HepG2 (cell line): ENCODE measurements at regions of chr1 and their contacts with region 1.

Region 1: GRCh38 chr1:33256701-33257399 is 558 bp downstream of the ZNF362 start:
- DNase-seq: peak; percentile 88
- ATAC-seq: peak; percentile 21
- H3K4me3 ChIP-seq: peak overlapping the region; percentile 72 to 98 (median 86)
- H3K27ac ChIP-seq: peak overlapping the region; percentile 97
- H3K4me1 ChIP-seq: peaks cover 53% of the 10 kb centered on the region
- H3K27me3 ChIP-seq: no peaks in the 10 kb centered on the region; a peak in 1 of 5 replicates
- CTCF ChIP-seq: no peak
- EP300 ChIP-seq: peak in 1 of 2 experiments; percentile 67; a peak in 2 of 4 replicates
- POLR2A ChIP-seq: peak; percentile 59 to 70; a peak in 3 of 4 replicates
- RAD21 ChIP-seq: no peak

Region 2: GRCh38 chr1:33181921-33182341 is 74.9 kb before region 1 on chr1 and contains the start of gene TRIM62:
- CTCF ChIA-PET with region 1: no interaction called
- POLR2A ChIA-PET with region 1: interaction called, 12 read pairs
- in situ Hi-C with region 1: no loop called
- intact Hi-C with region 1: no loop called
- DNase-seq: peak; percentile 50
- ATAC-seq: peak; percentile 78
- H3K4me3 ChIP-seq: peak within 1 kb of the TSS; percentile 53 to 81 (median 80)
- H3K27ac ChIP-seq: no peak within 1 kb of the TSS
- H3K4me1 ChIP-seq: peaks cover 23% of the 10 kb centered on the region
- H3K27me3 ChIP-seq: peaks cover 0 to 5% of the 10 kb centered on the region in 2 experiments; a peak in 1 of 5 replicates
- CTCF ChIP-seq: no peak
- EP300 ChIP-seq: no peak
- POLR2A ChIP-seq: peak in 1 of 2 experiments; percentile 55; a peak in 2 of 4 replicates
- RAD21 ChIP-seq: no peak
- total RNA-seq, gene TRIM62: 0.53 and 1.1 TPM in 2 replicates

Region 3: DNA sequence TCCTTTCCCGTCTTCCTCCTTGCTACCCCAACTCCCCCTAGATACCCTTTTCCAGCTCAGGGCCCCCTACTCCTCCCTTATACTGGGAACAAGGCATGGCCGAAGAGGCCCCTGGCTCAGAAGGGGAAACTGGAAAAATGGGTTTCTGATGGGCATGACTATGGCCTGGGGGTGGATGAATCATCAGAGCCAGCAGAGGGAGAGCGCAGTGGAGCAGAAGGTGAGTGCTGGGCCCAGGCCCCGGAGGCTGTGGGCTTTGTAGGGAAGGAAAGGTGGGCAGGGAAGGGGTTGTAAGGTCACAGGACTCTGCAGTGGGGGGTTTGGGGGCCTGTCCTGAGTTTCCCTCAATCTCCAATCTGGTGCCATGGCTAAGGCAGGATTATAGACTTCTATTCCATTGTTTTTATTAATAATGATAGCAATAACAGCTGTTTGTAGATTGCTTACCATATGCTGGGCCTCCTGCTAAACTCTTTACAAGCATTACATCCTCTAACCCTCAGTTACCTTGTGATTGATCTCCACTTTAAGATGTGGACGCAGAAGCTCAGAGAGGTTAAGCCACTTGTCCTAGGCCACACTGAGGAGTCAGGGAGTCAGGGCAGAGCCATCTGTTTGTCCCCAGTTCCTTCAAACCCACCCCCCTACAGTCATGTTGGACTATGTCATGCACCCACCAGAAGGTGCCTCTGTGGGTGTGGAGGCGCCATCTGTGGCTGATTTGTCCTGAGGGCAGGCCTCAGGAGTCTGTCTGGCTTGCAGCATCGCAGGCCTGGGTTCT is 36.8 kb before region 1 on chr1:
- CTCF ChIA-PET with region 1: no interaction called
- POLR2A ChIA-PET with region 1: interaction called, 3 read pairs
- in situ Hi-C with region 1: no loop called
- intact Hi-C with region 1: loop called (anchors 5 kb)
- DNase-seq: no peak
- ATAC-seq: peak; percentile 78
- H3K4me3 ChIP-seq: no peak overlapping the region
- H3K27ac ChIP-seq: no peak overlapping the region
- H3K4me1 ChIP-seq: peaks cover 30% of the 10 kb centered on the region; the same call in 1 of the 2 replicates
- H3K27me3 ChIP-seq: peaks cover 0 to 4% of the 10 kb centered on the region in 2 experiments; a peak in 1 of 5 replicates
- CTCF ChIP-seq: peak; percentile 42
- EP300 ChIP-seq: no peak
- POLR2A ChIP-seq: no peak
- RAD21 ChIP-seq: no peak

Region 4: DNA sequence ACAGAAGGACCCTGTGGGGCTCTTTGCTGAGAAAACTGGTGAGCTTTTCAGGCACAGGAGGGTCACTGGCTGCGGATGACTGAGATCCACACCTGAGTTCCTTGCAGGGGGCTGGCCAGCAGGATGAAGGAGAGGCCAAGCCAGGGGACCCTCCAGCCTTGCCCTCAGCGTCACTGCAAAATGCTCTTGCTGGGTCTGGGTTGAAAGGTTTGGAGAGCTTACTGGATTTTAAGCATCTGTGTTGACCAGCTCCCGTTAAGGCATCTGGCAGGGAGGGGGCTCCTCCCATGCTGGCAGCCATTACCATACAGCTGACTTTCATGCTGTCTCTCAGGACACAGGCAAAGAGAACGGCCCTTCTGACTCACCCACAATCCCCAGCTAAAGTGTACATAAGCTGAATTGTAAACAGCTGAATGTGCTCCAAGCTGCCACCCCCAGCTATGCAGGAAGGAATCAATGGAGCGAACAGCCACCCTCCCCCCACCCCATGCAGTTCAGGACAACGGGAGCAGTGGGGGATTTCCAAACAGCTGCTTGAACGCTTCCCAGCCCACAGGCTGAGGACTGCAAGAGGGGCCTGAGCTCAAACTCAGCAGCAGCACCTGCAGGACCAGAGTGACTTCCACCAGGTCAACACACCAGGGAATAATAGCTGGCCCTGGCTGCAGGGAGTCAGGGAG is 85.3 kb after region 1 on chr1:
- CTCF ChIA-PET with region 1: no interaction called
- POLR2A ChIA-PET with region 1: interaction called, 10 read pairs
- in situ Hi-C with region 1: no loop called
- intact Hi-C with region 1: no loop called
- DNase-seq: peak; percentile 97
- ATAC-seq: peak; percentile 90
- H3K4me3 ChIP-seq: peak overlapping the region in 2 of 3 experiments; percentile 18 to 57; a peak in 3 of 6 replicates
- H3K27ac ChIP-seq: peak overlapping the region; percentile 61
- H3K4me1 ChIP-seq: peaks cover 100% of the 10 kb centered on the region
- H3K27me3 ChIP-seq: no peaks in the 10 kb centered on the region
- CTCF ChIP-seq: peak; percentile 43
- EP300 ChIP-seq: peak; percentile 28 to 86; a peak in 2 of 4 replicates
- POLR2A ChIP-seq: peak; percentile 13 to 60; a peak in 2 of 4 replicates
- RAD21 ChIP-seq: peak; percentile 58

Region 5: DNA sequence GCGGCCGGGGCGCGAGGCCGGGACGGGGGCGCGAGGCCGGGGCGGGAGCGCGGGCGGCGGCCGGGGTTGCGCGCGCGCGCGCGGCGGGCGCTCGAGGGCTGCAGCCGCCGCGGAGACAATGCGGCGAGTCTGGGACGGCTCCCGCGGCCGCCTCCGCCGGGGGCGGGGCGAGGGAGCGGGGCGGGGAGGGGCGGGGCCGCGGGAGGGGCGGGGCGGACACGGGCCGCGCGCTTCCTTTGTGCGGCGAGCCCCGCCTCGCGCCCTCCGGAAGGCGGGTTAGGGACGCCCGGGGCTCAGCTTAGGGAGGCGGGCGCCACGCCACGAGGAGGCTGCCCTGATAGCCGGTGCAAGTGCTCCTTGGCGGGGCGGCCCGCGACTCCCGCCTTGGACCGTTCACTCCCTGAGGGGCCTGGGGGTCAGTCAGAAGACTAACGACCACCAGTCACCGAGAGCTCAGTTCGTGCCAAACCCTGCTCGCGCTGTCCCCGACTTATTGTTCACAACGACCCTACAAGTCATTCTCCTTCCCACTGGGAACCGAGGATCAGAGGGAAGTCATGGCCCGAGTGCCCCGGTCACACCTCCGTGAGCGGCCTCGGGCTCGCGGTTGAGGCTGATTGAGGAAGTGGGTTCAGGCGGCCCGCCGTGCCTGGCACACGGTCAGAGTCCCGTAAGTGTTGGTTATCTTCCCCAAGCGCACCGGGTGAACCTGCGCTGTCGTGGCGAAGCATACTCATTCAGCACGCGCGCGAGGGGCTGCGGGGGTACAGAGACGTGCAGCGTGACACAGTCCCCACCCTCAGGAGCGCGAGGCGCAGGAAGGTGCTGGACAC is 93.1 kb after region 1 on chr1:
- CTCF ChIA-PET with region 1: no interaction called
- POLR2A ChIA-PET with region 1: interaction called, 10 read pairs
- in situ Hi-C with region 1: no loop called
- intact Hi-C with region 1: no loop called
- DNase-seq: peak; percentile 62
- ATAC-seq: peak; percentile 78
- H3K4me3 ChIP-seq: peak overlapping the region; percentile 60 to 88 (median 88)
- H3K27ac ChIP-seq: peak overlapping the region; percentile 69
- H3K4me1 ChIP-seq: peaks cover 67% of the 10 kb centered on the region
- H3K27me3 ChIP-seq: no peaks in the 10 kb centered on the region; a peak in 1 of 5 replicates
- CTCF ChIP-seq: peak; percentile 29
- EP300 ChIP-seq: no peak
- POLR2A ChIP-seq: peak; percentile 77 to 92
- RAD21 ChIP-seq: peak; percentile 31; the same call in 1 of the 2 replicates